HEK293 (cell line): ENCODE measurements at regions of chr12 and their contacts with region 1.

Region 1: GRCh38 chr12:4857472-4858291 is 52.0 kb upstream of the KCNA1 start:
- H3K4me3 ChIP-seq: peak overlapping the region; percentile 19; the same call in 1 of the 2 replicates
- H3K27ac ChIP-seq: no peak overlapping the region
- H3K4me1 ChIP-seq: no peaks in the 10 kb centered on the region; the same call in 1 of the 2 replicates
- CTCF ChIP-seq: peak; percentile 70; the same call in 1 of the 2 replicates

Region 2: GRCh38 chr12:3743803-3744202 is 1113.9 kb before region 1 on chr12:
- CTCF ChIA-PET with region 1: no interaction called
- POLR2A ChIA-PET with region 1: no interaction called
- H3K4me3 ChIP-seq: no peak overlapping the region
- H3K27ac ChIP-seq: no peak overlapping the region
- H3K4me1 ChIP-seq: no peaks in the 10 kb centered on the region; the same call in 1 of the 2 replicates
- CTCF ChIP-seq: no peak

Region 3: DNA sequence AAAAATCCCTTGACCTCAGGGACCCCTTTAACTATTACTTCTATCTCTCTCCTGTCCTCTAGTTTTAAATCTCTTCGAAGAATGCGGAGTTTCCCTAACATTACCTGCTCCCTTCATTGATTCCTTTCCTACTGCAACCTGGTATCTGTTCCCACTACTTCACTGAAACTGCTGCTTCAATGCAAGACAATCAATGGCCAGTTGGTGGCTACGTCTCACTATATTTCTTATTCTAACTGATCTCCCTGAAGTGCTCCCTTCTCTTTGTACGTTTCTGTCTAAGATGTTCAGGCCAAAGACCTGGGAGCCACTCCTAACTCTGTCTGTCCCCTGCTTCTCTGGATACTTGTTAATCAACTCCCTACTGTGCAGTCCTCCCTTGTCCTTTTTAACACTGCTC is 41.7 kb after region 1 on chr12:
- CTCF ChIA-PET with region 1: interaction called, 23 read pairs
- POLR2A ChIA-PET with region 1: no interaction called
- H3K4me3 ChIP-seq: no peak overlapping the region
- H3K27ac ChIP-seq: no peak overlapping the region
- H3K4me1 ChIP-seq: no peaks in the 10 kb centered on the region
- CTCF ChIP-seq: 0 out of 2 replicates have a peak, but pooled peaks have one; percentile 8

Region 4: DNA sequence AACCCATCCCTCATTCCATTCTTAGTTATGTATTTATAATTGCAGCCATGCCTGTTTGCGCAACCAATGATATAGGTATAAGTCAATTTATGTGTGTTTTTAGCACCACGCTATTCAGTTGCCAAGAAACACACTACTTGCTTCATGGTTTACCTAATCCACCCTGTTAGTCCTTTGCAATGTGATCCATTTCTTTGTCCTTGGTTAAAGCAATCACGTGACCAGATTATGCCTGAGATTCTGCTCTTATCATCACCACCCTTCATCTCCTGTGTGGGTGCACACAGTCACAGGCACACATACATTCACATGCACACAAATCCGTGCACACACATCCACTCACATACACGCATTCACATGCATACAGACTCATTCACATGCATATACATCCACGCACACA is 133.7 kb after region 1 on chr12:
- CTCF ChIA-PET with region 1: interaction called, 185 read pairs
- POLR2A ChIA-PET with region 1: no interaction called
- H3K4me3 ChIP-seq: no peak overlapping the region
- H3K27ac ChIP-seq: no peak overlapping the region
- H3K4me1 ChIP-seq: no peaks in the 10 kb centered on the region
- CTCF ChIP-seq: no peak

Region 5: DNA sequence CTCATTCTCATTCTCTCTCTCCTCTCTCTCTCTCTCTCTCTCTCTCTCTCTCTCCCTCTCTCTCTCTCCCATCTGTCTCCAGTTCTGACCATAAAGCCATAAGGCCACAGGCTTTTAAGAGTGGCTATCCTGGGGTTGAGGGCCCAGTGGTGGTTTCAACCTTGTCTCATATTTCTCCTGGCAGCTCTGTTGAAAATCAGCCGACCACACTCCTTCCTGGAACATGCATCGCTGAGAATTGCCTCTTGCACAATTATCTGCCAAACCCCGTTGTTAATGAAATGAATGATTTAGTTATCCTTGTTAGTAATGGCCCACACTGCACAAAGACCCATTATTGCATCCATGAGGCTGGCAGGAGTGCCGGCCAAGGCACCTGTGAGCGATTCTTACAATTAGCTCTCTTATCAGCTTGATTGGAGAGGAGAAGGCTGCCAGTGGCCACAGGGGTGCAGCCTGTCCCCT is 155.6 kb after region 1 on chr12:
- CTCF ChIA-PET with region 1: interaction called, 17 read pairs
- POLR2A ChIA-PET with region 1: no interaction called
- H3K4me3 ChIP-seq: no peak overlapping the region
- H3K27ac ChIP-seq: no peak overlapping the region
- H3K4me1 ChIP-seq: no peaks in the 10 kb centered on the region
- CTCF ChIP-seq: no peak

Region 6: DNA sequence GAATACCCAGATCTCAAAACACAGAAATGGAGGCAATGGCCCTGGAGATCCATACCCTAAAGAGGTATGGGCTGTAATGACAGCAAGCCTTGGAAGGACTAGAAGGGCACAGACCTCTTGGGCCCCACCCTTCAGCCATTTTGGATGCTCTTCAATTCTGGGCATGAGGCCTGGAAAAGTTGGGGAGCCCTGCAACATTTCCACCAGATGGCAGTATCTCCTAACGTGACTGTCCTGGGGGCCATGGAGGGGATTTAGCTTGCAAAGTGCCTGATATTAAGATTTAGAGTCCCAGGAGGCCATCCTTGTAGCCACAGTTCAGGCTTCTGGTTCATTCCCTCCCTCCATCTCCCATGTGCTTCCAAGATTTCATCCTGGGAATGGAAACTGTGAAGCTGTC is 216.2 kb after region 1 on chr12:
- CTCF ChIA-PET with region 1: interaction called, 15 read pairs
- POLR2A ChIA-PET with region 1: no interaction called
- H3K4me3 ChIP-seq: no peak overlapping the region
- H3K27ac ChIP-seq: no peak overlapping the region
- H3K4me1 ChIP-seq: peaks cover 9% of the 10 kb centered on the region; the same call in 1 of the 2 replicates
- CTCF ChIP-seq: no peak